Aorta (tissue), 5 donors: ENCODE measurements at regions of chr10 and their contacts with region 1.

Region 1: GRCh38 chr10:11017570-11018431 is at the start of gene CELF2:
- DNase-seq: peak; percentile 61 to 89
- ATAC-seq: peak; percentile 54
- H3K4me3 ChIP-seq: peak within 1 kb of the TSS; percentile 56 to 88
- H3K27ac ChIP-seq: peak within 1 kb of the TSS; percentile 29 to 79
- H3K4me1 ChIP-seq: peaks cover 0 to 3% of the 10 kb centered on the region in 2 donors
- H3K27me3 ChIP-seq: no peaks in the 10 kb centered on the region
- total RNA-seq, gene CELF2: 52.6 to 55.4 TPM

Region 2: GRCh38 chr10:10792681-10793080 is 225.1 kb before region 1 on chr10:
- intact Hi-C with region 1: loop called (anchors 5 to 10 kb)
- DNase-seq: no peak
- ATAC-seq: no peak
- H3K4me3 ChIP-seq: no peak overlapping the region
- H3K27ac ChIP-seq: no peak overlapping the region
- H3K4me1 ChIP-seq: peaks cover 0 to 4% of the 10 kb centered on the region in 2 donors
- H3K27me3 ChIP-seq: no peaks in the 10 kb centered on the region

Region 3: GRCh38 chr10:10798102-10798863 is 219.5 kb before region 1 on chr10:
- intact Hi-C with region 1: loop called (anchors 5 to 10 kb)
- DNase-seq: peak in 1 of 2 donors; percentile 77
- ATAC-seq: peak; percentile 68
- H3K4me3 ChIP-seq: peak overlapping the region; percentile 22 to 55
- H3K27ac ChIP-seq: peak overlapping the region; percentile 92 to 94
- H3K4me1 ChIP-seq: peaks cover 2 to 9% of the 10 kb centered on the region in 2 donors
- H3K27me3 ChIP-seq: no peaks in the 10 kb centered on the region

Region 4: GRCh38 chr10:10824591-10825148 is 193.1 kb before region 1 on chr10:
- intact Hi-C with region 1: loop called in 1 of 2 experiments (anchors 10 kb)
- DNase-seq: peak; percentile 65 to 81
- ATAC-seq: peak; percentile 86
- H3K4me3 ChIP-seq: no peak overlapping the region
- H3K27ac ChIP-seq: peak overlapping the region; percentile 80 to 93
- H3K4me1 ChIP-seq: peaks cover 4 to 11% of the 10 kb centered on the region in 2 donors
- H3K27me3 ChIP-seq: no peaks in the 10 kb centered on the region

Region 5: DNA sequence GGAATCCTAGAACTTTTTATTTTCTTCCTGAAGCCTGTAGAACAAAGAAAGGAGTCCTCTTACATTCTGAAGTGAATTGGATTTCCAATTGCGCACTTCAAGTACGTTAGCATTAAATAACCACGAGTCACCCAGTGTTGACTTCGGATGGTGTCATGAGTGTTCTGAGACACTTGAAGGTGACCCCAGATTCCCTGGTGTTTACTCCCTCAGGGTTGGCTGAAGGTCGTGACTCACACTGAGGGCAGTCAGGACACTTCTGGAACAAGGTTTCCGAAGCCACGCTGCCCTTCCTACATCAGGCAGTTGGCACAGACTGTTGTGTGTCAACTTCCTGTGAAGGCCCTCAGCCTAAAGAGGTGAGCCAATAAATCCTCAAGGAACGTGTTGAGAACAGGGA is 186.7 kb before region 1 on chr10:
- intact Hi-C with region 1: loop called (anchors 2 to 10 kb)
- DNase-seq: peak; percentile 82 to 84
- ATAC-seq: peak; percentile 79
- H3K4me3 ChIP-seq: no peak overlapping the region
- H3K27ac ChIP-seq: peak overlapping the region; percentile 72 to 92
- H3K4me1 ChIP-seq: peaks cover 0 to 3% of the 10 kb centered on the region in 2 donors
- H3K27me3 ChIP-seq: no peaks in the 10 kb centered on the region

Region 6: GRCh38 chr10:10872035-10872673 is 145.6 kb before region 1 on chr10:
- intact Hi-C with region 1: loop called in 1 of 2 experiments (anchors 5 kb)
- DNase-seq: peak in 1 of 2 donors; percentile 55
- ATAC-seq: peak; percentile 89
- H3K4me3 ChIP-seq: no peak overlapping the region
- H3K27ac ChIP-seq: peak overlapping the region; percentile 51 to 85
- H3K4me1 ChIP-seq: peaks cover 5% of the 10 kb centered on the region in 2 donors
- H3K27me3 ChIP-seq: no peaks in the 10 kb centered on the region

Region 7: GRCh38 chr10:10886861-10887531 is 130.8 kb before region 1 on chr10:
- intact Hi-C with region 1: loop called in 1 of 2 experiments (anchors 10 kb)
- DNase-seq: no peak
- ATAC-seq: peak; percentile 33
- H3K4me3 ChIP-seq: no peak overlapping the region
- H3K27ac ChIP-seq: peak overlapping the region in 1 of 2 donors; percentile 44
- H3K4me1 ChIP-seq: peaks cover 8 to 10% of the 10 kb centered on the region in 2 donors
- H3K27me3 ChIP-seq: no peaks in the 10 kb centered on the region

Region 8: GRCh38 chr10:10967581-10968256 is 50.1 kb before region 1 on chr10:
- intact Hi-C with region 1: no loop called
- DNase-seq: no peak
- ATAC-seq: no peak
- H3K4me3 ChIP-seq: no peak overlapping the region
- H3K27ac ChIP-seq: no peak overlapping the region
- H3K4me1 ChIP-seq: no peaks in the 10 kb centered on the region
- H3K27me3 ChIP-seq: no peaks in the 10 kb centered on the region

Region 9: DNA sequence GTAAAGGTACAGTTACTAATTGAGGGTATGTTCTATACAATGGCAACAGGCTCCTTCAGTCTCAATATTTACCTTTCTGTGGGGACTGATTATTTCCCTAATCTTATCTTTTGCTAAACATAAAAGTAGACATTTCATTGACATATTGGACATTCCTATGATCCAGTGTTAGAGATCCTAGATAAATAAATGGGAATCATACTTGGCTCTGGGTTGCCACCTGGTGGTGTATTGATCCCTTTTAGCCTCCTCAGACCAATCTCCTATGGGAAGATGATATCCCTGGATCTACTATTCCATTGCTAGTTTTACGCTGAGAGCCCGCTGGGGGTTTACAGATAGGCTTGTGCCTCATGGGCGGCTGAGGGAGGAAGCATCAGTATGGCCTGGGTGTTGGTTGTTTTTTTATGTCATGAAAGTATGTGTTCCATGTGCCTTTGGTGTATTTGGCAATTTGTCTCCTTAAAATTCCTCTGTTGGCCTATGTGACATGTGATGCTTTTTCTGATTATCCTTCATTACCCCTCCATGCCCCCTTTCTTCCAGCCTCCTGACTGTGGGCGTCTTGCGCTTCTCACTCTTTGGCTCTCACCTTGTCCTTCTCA is 18.7 kb after region 1 on chr10:
- intact Hi-C with region 1: no loop called
- DNase-seq: no peak
- ATAC-seq: peak; percentile 68
- H3K4me3 ChIP-seq: no peak overlapping the region
- H3K27ac ChIP-seq: no peak overlapping the region
- H3K4me1 ChIP-seq: no peaks in the 10 kb centered on the region
- H3K27me3 ChIP-seq: no peaks in the 10 kb centered on the region

Region 10: GRCh38 chr10:11058965-11059364 is 41.2 kb after region 1 on chr10:
- intact Hi-C with region 1: no loop called
- DNase-seq: no peak
- ATAC-seq: no peak
- H3K4me3 ChIP-seq: no peak overlapping the region
- H3K27ac ChIP-seq: no peak overlapping the region
- H3K4me1 ChIP-seq: peaks cover 0 to 2% of the 10 kb centered on the region in 2 donors
- H3K27me3 ChIP-seq: no peaks in the 10 kb centered on the region